Right ventricle myocardium inferior (tissue), 1 donor: ENCODE measurements at regions of chr12 and their contacts with region 1.

Region 1: DNA sequence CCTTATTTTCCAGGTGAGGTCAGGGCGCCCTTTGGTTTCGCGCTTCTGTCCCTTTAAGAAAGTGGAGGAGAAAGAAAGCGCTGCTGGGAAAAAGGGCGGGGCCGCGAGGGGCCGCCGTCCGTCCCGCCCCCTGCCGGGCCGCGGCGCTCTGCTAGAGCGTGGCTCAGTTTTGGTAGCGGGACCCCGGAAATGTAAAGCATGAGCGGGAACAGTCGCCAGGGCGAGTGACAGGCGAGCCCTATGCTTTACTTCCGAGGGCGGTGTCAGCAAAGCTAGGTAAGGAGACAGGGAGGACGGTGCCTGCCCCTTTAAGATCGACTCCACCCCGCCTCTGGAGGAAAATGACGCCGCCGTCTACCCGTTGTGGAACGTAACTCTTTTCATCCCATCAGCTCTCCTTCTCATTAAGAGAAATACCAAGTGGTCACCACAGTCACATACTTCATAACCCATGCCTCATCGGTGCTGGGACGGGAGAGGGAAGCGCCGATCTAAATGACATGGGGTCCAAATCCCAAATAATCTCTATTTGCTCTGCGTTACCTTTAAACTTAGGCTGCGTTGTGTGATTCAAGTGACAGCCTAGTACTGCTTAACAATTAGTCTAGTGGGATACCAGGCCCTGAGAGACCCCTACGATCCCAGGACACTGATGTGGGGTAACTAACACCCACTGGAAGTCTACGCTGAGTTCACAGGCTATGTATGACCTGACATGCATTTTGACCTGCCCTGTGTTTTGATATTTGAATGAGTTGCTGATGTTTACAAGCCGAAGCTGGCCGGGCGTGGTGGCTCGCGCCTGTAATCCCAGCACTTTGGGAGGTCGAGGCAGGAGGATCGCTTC is at the start of gene ETFBKMT:
- DNase-seq: peak; percentile 93
- ATAC-seq: peak; percentile 96
- total RNA-seq, gene ETFBKMT: 6.4 TPM

Region 2: GRCh38 chr12:31728917-31729640 is 69.8 kb after region 1 on chr12 and contains the start of gene AMN1:
- intact Hi-C with region 1: loop called (anchors 5 kb)
- DNase-seq: peak; percentile 100
- ATAC-seq: peak; percentile 99
- total RNA-seq, gene AMN1: 11.5 TPM

Region 3: DNA sequence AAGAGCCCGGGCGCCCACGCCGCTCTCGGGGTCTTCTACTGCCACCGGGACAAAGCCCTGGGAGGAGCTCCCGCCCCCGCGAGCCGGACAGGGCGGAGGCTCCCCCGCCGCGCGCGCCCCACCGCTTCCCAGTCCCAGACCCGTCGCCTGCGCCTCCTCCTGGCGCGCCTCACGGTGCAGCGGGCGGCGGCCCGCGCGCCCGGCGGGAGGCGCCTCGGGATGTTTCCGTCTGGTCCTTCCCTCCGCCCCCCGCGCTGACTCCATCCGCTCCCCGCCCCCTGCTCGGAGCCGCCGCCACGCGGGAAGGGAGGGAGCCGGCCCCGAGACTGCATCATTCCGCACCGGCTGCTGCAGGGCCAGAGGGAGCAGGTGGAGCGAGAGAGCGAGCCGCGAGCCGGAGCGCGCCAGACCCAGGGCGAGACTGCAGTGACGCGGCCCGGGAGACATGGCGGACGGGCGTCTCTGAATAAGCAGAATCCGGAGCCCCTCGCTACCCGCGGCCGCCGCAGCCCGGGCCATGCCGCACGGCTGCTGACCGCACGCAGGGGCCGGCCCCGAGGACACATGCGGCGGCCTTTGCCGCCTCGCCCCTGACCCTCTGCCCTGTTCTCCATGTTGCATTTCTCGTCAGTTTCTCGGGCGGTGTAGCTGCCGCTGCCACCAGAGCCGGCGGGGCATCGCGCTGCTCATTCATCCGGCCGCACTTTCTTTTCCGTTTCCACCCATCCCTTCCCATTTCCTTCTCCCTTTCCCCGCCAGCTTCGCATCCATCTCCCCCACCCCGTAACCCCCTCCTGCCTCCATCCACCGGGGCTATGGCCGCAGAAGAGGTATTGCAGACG is 447.4 kb after region 1 on chr12 and contains the start of gene BICD1:
- intact Hi-C with region 1: loop called (anchors 10 kb)
- DNase-seq: peak; percentile 93
- ATAC-seq: peak; percentile 98
- total RNA-seq, gene BICD1: 4.2 TPM

Region 4: GRCh38 chr12:32679091-32679919 is 1020.0 kb after region 1 on chr12 and contains the start of gene DNM1L:
- intact Hi-C with region 1: loop called (anchors 10 kb)
- DNase-seq: peak; percentile 97
- ATAC-seq: peak; percentile 99
- total RNA-seq, gene DNM1L: 53.5 TPM